Ascending aorta (tissue), 2 donors: ENCODE measurements at regions of chr15 and their contacts with region 1.

Region 1: DNA sequence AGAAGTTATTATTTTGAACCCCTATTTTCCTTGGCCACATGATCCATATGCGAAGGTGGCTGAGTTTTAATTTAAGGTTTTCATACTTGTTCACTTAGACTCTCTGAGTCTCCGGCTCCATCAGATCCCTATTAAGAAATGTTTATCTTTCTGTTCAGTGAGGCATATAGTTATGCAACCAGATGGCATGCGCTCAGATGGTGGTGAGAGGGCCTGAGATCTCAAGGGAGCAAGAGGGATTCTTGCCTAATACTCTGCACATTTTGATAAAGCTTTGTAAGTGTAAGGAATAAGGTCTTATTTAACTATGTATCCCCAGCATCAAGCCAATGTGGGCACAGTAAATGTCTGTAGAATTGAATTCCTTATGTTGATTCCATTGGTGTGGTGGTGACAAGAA is 78.9 kb upstream of the DPH6 start:
- DNase-seq: peak; percentile 12 to 83
- H3K4me3 ChIP-seq: peak overlapping the region in 1 of 2 donors; percentile 18
- H3K27ac ChIP-seq: no peak overlapping the region
- H3K4me1 ChIP-seq: peaks cover 3 to 19% of the 10 kb centered on the region in 2 donors
- H3K27me3 ChIP-seq: no peaks in the 10 kb centered on the region
- CTCF ChIP-seq: no peak

Region 2: GRCh38 chr15:35545824-35546510 is 78.9 kb before region 1 on chr15 and contains the start of gene DPH6:
- intact Hi-C with region 1: loop called (anchors 5 kb)
- DNase-seq: peak; percentile 15 to 90
- H3K4me3 ChIP-seq: peak within 1 kb of the TSS; percentile 72 to 84
- H3K27ac ChIP-seq: peak within 1 kb of the TSS; percentile 93 to 98
- H3K4me1 ChIP-seq: peaks cover 0 to 13% of the 10 kb centered on the region in 2 donors
- H3K27me3 ChIP-seq: no peaks in the 10 kb centered on the region
- CTCF ChIP-seq: no peak
- total RNA-seq, gene DPH6: 9.0 TPM

Region 3: DNA sequence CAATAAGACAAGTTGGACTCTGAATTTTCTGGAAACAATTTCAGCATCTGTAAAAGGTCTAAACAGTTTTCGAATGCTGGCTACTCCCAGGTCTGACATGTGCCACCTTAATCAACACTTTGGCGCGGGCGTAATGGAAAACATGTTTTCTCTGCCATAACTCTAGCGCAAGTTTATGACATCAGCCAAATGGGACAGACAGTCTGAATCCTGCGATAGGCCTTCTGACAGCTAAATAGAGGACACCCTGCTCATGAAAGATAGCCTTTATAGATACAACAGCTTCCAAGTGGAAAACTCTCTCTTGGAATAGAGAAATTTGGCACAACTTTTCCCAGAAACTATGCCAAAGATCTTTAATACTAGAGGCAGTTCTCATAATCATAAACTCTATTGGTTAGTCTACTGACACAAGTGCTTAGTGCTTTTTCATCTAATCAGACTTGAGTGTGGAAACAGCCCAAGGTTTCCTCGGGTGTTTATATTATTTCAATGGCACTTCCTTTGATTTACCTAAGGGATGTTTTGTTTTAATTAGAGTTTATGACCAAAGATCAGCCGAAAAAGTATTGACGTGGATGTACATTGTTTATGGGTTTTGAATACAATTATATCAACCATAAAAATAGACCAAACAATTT is 41.1 kb after region 1 on chr15:
- intact Hi-C with region 1: loop called (anchors 5 kb)
- DNase-seq: peak in 1 of 2 donors; percentile 71
- H3K4me3 ChIP-seq: no peak overlapping the region
- H3K27ac ChIP-seq: peak overlapping the region; percentile 64 to 66
- H3K4me1 ChIP-seq: peaks cover 0 to 19% of the 10 kb centered on the region in 2 donors
- H3K27me3 ChIP-seq: no peaks in the 10 kb centered on the region
- CTCF ChIP-seq: no peak

Region 4: DNA sequence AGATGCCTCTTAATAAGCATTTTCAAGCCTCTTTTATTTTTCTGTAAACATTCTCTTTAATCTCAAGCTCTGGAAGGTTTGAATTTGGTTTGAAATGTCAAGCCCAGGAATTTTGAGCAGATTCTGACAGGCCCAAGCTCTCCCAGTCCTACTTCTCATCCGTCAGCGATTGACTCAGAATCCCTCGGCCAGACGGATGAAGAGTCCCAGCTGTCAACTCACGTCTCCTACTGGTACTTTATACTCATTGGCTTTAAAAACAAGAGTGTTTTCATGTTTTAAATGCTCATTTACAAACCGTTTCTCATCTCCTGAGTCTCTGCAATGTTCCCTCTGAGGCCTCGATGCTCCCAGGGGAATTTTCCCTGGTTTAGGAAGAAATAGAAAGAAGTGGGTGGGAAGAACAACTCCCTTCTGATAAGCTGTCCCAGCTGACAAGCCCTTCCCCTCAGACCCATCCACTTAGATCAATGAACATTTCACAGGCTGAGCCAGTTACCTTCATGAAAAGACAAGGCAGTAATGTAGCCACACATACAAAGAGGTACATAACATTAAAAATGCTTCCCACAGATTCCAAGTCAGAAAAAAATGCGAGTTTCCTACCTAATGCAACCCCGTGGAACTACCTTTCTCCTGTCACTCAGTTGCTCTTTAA is 399.3 kb after region 1 on chr15:
- intact Hi-C with region 1: no loop called
- DNase-seq: no peak
- H3K4me3 ChIP-seq: no peak overlapping the region
- H3K27ac ChIP-seq: no peak overlapping the region
- H3K4me1 ChIP-seq: no peaks in the 10 kb centered on the region
- H3K27me3 ChIP-seq: no peaks in the 10 kb centered on the region
- CTCF ChIP-seq: no peak